SK-MEL-5 (cell line): ENCODE measurements at regions of chr2 and their contacts with region 1.

Region 1: DNA sequence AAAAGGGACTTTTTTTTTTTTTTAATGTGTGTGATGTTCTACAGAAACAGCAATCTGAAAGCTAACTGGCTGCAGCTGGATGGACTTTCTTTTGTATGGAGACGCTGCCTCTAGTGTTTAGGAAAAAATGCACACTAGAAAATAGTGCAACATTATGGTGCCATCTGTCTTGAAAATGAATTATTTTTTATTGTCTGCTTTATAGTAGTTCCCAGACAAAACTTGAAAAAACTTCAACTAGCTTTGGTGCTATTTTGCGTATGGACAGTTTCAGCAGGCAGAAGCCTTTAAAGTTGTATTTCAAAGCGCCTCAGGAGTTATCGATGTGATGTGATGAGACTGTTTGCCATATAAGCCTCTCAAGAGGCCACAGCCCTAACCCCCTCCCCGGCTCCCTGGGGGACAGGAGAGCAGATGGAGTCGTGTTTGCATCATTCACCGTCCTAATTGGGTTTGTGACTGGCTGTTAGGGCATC is 86.9 kb downstream of the LTBP1 start:
- DNase-seq: peak; percentile 71

Region 2: GRCh38 chr2:33372940-33373553 is 339.4 kb after region 1 on chr2:
- in situ Hi-C with region 1: loop called (anchors 10 kb)
- DNase-seq: peak; percentile 66